ENCODE measurements at regions of chr17 and their contacts with region 1.

Region 1: DNA sequence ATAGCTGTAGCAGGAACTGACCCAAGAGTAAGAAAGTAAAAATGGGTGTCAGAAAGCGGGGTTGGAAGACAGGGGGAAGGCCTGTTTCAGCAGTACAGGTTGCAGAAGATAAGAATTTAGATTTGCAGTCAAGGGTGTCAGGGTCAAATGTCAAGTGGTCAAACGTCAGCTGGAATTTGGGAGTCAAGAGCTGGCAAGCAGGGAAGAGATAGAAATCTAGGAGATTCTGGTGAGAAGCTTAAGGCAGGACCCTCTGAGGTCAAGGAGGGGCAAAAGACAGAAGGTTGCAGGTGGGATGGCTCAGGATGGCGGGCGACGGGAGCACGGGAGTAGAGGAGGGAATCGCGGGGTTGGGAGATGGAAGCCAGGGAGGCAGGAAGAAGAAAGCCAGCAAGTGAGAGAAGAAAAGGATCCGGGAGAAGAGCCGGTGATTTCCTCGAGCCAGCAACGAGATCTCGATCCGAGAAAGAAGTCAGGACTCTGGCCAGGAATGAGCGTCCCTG is 335 bp downstream of the SLC25A35 start:
- DNase-seq: no peak
- ATAC-seq: no peak
- H3K4me3 Mint-ChIP-seq: peak overlapping the region; percentile 84
- H3K27ac Mint-ChIP-seq: peak overlapping the region; percentile 90
- H3K4me1 Mint-ChIP-seq: peaks cover 48% of the 10 kb centered on the region
- H3K27me3 Mint-ChIP-seq: no peaks in the 10 kb centered on the region

Region 2: DNA sequence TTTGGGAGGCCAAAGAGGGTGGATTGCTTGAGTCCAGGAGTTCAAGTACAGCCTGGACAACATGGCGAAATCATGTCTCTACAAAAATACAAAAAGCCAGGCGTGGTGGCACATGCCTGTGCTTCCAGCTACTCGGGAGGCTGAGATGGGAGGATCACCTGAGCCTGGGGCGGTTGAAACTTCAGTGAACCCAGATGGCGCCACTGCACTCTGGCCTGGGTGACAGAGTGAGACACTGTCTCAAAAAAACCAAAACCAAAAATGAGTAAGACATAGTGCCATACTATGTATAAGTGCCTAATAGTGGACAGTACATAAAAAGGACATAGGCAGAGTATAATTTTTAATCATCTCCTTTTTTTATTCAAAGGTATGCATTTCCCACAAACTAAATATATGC is 51.0 kb before region 1 on chr17:
- CTCF ChIA-PET with region 1: interaction called, 17 read pairs
- POLR2A ChIA-PET with region 1: interaction called, 50 read pairs
- DNase-seq: peak; percentile 54
- ATAC-seq: no peak
- H3K4me3 Mint-ChIP-seq: no peak overlapping the region
- H3K27ac Mint-ChIP-seq: peak overlapping the region; percentile 60
- H3K4me1 Mint-ChIP-seq: peaks cover 40% of the 10 kb centered on the region
- H3K27me3 Mint-ChIP-seq: no peaks in the 10 kb centered on the region

Region 3: GRCh38 chr17:8283356-8283755 is 11.5 kb before region 1 on chr17:
- CTCF ChIA-PET with region 1: interaction called, 12 read pairs
- POLR2A ChIA-PET with region 1: interaction called, 8 read pairs
- DNase-seq: no peak
- ATAC-seq: no peak
- H3K4me3 Mint-ChIP-seq: no peak overlapping the region
- H3K27ac Mint-ChIP-seq: peak overlapping the region; percentile 30
- H3K4me1 Mint-ChIP-seq: peaks cover 21% of the 10 kb centered on the region
- H3K27me3 Mint-ChIP-seq: no peaks in the 10 kb centered on the region